Panc1 (cell line): ENCODE measurements at regions of chr7 and their contacts with region 1.

Region 1: DNA sequence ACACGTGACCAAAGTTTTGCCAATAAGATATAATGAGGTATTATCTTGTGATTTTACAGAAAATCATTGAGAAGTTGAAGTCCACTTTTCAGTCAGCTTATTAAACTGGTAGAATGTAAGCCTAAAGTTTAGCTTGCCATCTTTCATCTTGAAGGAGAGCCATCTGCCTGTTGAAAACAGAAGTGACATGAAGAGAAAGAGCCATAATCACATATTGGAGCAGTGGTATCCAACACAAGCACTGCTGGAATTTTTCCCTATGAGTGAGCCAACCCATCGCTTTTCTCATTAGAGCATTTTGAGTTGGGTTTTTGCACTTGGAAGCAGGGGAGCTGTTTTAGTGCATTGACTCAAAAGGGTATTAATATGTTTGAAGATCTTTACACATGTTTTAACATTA is 117.6 kb upstream of the FERD3L start:
- DNase-seq: no peak
- ATAC-seq: no peak
- H3K4me3 ChIP-seq: no peak overlapping the region
- H3K27ac ChIP-seq: no peak overlapping the region
- H3K4me1 ChIP-seq: no peaks in the 10 kb centered on the region
- H3K27me3 ChIP-seq: no peaks in the 10 kb centered on the region
- CTCF ChIP-seq: peak; percentile 19; the same call in 1 of the 2 replicates

Region 2: DNA sequence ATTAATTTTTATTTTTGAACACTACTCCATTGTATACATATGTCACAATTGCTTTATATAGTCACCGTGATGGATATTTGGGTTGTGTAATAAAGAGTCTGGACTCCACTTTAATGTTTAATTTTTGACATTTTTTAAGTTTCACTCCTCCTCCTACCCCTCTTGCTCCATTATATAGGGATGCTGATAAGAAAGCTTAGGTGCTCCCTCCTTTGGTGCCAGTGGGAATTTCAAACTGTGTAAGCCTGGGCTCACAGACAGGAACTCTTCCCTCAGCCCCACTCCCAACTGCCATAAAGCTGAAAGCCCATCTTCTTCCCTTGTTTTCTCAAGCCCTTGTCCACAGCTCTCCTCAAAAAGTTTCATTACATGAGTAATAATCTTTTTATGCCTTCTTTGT is 193.0 kb before region 1 on chr7:
- CTCF ChIA-PET with region 1: no interaction called
- POLR2A ChIA-PET with region 1: no interaction called
- in situ Hi-C with region 1: no loop called
- intact Hi-C with region 1: no loop called
- DNase-seq: no peak
- ATAC-seq: no peak
- H3K4me3 ChIP-seq: no peak overlapping the region
- H3K27ac ChIP-seq: no peak overlapping the region
- H3K4me1 ChIP-seq: no peaks in the 10 kb centered on the region
- H3K27me3 ChIP-seq: no peaks in the 10 kb centered on the region
- CTCF ChIP-seq: peak; percentile 21; the same call in 1 of the 2 replicates

Region 3: DNA sequence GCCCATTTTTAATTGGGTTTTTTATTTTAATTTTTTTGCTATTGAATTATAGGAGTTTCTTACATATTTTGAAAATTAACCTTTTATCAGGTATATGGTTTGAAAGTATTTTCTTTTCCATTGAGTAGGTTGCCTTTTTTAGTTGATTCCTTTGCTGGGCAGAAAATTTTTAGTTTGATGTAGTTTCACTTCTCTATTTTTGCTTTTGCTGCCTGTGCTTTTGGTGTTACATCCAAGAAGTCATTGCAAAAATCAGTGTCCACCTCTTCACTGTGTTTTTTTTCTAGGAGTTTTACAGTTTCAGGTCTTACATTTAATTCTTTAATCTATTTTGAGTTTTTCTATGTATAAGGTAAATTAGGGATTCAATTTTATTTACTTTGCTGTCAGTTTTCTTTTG is 12.2 kb after region 1 on chr7:
- CTCF ChIA-PET with region 1: interaction called, 10 read pairs
- POLR2A ChIA-PET with region 1: no interaction called
- in situ Hi-C with region 1: no loop called
- intact Hi-C with region 1: no loop called
- DNase-seq: no peak
- ATAC-seq: no peak
- H3K4me3 ChIP-seq: no peak overlapping the region
- H3K27ac ChIP-seq: no peak overlapping the region
- H3K4me1 ChIP-seq: no peaks in the 10 kb centered on the region
- H3K27me3 ChIP-seq: no peaks in the 10 kb centered on the region
- CTCF ChIP-seq: no peak